Caco-2 (cell line): ENCODE measurements at regions of chr20 and their contacts with region 1.

Region 1: GRCh38 chr20:51918016-51918415 is 115.7 kb upstream of the SALL4 start:
- DNase-seq: peak; percentile 69 to 71
- H3K4me3 ChIP-seq: no peak overlapping the region
- H3K4me3 Mint-ChIP-seq: peak overlapping the region; percentile 68
- H3K27ac Mint-ChIP-seq: peak overlapping the region; percentile 89
- H3K4me1 ChIP-seq: peaks cover 32% of the 10 kb centered on the region
- H3K4me1 Mint-ChIP-seq: peaks cover 33% of the 10 kb centered on the region
- H3K27me3 ChIP-seq: no peaks in the 10 kb centered on the region
- H3K27me3 Mint-ChIP-seq: no peaks in the 10 kb centered on the region
- CTCF ChIP-seq: no peak

Region 2: DNA sequence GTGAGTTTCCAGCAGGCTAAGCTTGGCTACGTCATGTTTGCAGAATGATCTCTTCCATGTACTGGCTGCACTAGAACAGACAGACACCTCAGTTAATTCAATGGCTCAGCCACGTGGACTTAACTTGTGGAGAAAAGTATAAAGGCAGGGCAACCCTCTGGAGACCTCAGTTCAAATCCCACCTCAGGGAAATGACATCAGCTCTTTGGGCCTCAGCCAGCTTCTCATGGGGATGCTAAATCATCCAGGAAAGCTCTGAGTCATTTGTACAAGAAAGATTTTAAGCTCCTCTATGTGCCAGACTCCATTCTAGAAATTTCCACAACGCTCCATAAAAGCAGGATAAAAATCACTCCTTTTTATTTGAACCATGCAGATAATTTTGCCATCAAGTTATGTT is 12.8 kb after region 1 on chr20:
- CTCF ChIA-PET with region 1: interaction called, 6 read pairs
- POLR2A ChIA-PET with region 1: no interaction called
- intact Hi-C with region 1: loop called (anchors 1 kb)
- DNase-seq: no peak
- H3K4me3 ChIP-seq: no peak overlapping the region
- H3K4me3 Mint-ChIP-seq: peak overlapping the region; percentile 65
- H3K27ac Mint-ChIP-seq: peak overlapping the region; percentile 80
- H3K4me1 ChIP-seq: peaks cover 34% of the 10 kb centered on the region
- H3K4me1 Mint-ChIP-seq: peaks cover 33% of the 10 kb centered on the region
- H3K27me3 ChIP-seq: no peaks in the 10 kb centered on the region
- H3K27me3 Mint-ChIP-seq: no peaks in the 10 kb centered on the region
- CTCF ChIP-seq: no peak

Region 3: GRCh38 chr20:52015155-52015554 is 97.1 kb after region 1 on chr20:
- CTCF ChIA-PET with region 1: no interaction called
- POLR2A ChIA-PET with region 1: no interaction called
- intact Hi-C with region 1: no loop called
- DNase-seq: peak in 1 of 2 experiments; percentile 63
- H3K4me3 ChIP-seq: no peak overlapping the region
- H3K4me3 Mint-ChIP-seq: peak overlapping the region; percentile 6
- H3K27ac Mint-ChIP-seq: peak overlapping the region; percentile 12
- H3K4me1 ChIP-seq: peaks cover 31% of the 10 kb centered on the region
- H3K4me1 Mint-ChIP-seq: peaks cover 36% of the 10 kb centered on the region
- H3K27me3 ChIP-seq: no peaks in the 10 kb centered on the region
- H3K27me3 Mint-ChIP-seq: no peaks in the 10 kb centered on the region
- CTCF ChIP-seq: no peak